ENCODE measurements at regions of chr7 and their contacts with region 1.

Region 1: DNA sequence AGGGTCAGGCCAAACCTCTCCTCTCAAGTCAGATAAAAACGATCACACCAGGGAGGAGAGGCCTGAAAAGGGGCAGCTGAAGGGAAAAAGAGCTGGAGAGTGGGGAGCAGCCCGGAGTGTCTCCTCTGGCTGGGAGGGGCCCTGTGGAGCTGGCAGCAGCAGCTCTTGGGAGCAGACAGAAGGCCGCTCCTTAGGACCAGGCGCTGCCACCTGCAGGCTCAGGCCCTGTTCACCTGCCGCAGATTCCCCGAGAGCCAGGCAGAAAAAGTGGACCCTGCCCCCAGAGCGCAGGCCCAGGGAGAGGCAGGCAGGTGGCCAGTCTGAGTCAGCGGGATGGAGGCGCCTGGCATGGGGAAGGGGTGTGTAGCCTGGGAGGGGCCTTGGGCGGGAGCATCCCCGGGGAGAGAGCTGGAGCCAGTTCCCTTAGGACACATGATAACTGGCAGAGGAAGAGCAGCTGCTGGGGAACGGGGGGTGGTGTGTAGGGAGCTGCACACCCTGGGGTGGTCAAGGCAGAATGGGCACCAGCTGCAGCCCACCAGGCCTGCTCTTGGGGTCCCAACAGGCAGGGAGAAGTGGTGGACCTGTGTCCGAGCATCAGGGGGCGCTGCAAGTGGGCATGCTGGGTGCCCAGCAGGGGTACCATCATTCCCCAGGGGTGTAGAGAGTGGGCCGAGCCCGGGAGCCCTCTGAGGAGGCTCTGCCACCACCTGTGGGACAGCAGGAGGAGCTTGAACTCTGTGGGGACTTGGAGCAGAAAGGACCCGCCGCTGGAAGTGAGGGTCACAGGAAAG is 177.2 kb upstream of the RHEB start:
- DNase-seq: peak; percentile 57
- ATAC-seq: peak; percentile 62 to 81

Region 2: GRCh38 chr7:151539088-151539671 is 157.7 kb before region 1 on chr7:
- intact Hi-C with region 1: no loop called
- DNase-seq: peak; percentile 41
- ATAC-seq: peak; percentile 82 to 93

Region 3: GRCh38 chr7:151631968-151632749 is 64.8 kb before region 1 on chr7:
- intact Hi-C with region 1: loop called in 1 of 2 experiments (anchors 10 kb)
- DNase-seq: peak; percentile 83
- ATAC-seq: peak; percentile 86 to 90

Region 4: DNA sequence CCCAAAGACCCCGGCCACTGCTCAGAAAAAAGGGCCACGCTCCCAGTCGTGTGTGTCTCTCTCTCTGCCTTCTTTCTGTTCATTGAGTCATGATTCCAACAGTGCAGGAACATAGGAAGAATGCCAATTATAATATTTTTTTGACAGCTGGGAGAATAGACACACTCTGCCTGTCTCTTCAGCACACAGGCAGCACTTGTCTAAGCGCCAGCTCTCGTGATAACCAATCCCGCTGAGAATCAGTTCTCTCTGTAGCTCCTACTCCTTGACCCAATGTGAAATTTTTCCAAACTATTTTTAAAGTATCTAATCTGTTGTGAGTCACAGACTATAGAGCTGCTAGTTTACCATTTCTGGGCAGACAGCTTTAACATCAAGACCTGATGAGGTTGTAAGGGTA is 31.6 kb before region 1 on chr7:
- intact Hi-C with region 1: loop called in 1 of 2 experiments (anchors 2 kb)
- DNase-seq: peak; percentile 85
- ATAC-seq: peak; percentile 88 to 91

Measured in left cardiac atrium (tissue), 4 donors.